ENCODE measurements at regions of chr4 and their contacts with region 1.

Region 1: GRCh38 chr4:93981594-93981993 is 153.0 kb downstream of the ATOH1 start:
- DNase-seq: no peak
- H3K4me3 ChIP-seq: no peak overlapping the region
- H3K27ac ChIP-seq: no peak overlapping the region
- H3K4me1 ChIP-seq: no peaks in the 10 kb centered on the region
- H3K27me3 ChIP-seq: no peaks in the 10 kb centered on the region
- CTCF ChIP-seq: no peak

Region 2: GRCh38 chr4:93791570-93792195 is 189.9 kb before region 1 on chr4:
- CTCF ChIA-PET with region 1: no interaction called
- dilution Hi-C with region 1: no loop called
- in situ Hi-C with region 1: no loop called
- intact Hi-C with region 1: no loop called
- DNase-seq: peak; percentile 26
- H3K4me3 ChIP-seq: no peak overlapping the region
- H3K27ac ChIP-seq: no peak overlapping the region
- H3K4me1 ChIP-seq: no peaks in the 10 kb centered on the region
- H3K27me3 ChIP-seq: no peaks in the 10 kb centered on the region
- CTCF ChIP-seq: peak; percentile 89 to 90

Region 3: GRCh38 chr4:94006932-94007331 is 25.3 kb after region 1 on chr4:
- CTCF ChIA-PET with region 1: no interaction called
- dilution Hi-C with region 1: no loop called
- in situ Hi-C with region 1: no loop called
- intact Hi-C with region 1: loop called (anchors 1 kb)
- DNase-seq: no peak
- H3K4me3 ChIP-seq: no peak overlapping the region
- H3K27ac ChIP-seq: no peak overlapping the region
- H3K4me1 ChIP-seq: no peaks in the 10 kb centered on the region
- H3K27me3 ChIP-seq: peaks cover 3% of the 10 kb centered on the region
- CTCF ChIP-seq: no peak

Measured in mammary epithelial cell (primary cell).